Endothelial cell of umbilical vein (primary cell): ENCODE measurements at regions of chr12 and their contacts with region 1.

Region 1: DNA sequence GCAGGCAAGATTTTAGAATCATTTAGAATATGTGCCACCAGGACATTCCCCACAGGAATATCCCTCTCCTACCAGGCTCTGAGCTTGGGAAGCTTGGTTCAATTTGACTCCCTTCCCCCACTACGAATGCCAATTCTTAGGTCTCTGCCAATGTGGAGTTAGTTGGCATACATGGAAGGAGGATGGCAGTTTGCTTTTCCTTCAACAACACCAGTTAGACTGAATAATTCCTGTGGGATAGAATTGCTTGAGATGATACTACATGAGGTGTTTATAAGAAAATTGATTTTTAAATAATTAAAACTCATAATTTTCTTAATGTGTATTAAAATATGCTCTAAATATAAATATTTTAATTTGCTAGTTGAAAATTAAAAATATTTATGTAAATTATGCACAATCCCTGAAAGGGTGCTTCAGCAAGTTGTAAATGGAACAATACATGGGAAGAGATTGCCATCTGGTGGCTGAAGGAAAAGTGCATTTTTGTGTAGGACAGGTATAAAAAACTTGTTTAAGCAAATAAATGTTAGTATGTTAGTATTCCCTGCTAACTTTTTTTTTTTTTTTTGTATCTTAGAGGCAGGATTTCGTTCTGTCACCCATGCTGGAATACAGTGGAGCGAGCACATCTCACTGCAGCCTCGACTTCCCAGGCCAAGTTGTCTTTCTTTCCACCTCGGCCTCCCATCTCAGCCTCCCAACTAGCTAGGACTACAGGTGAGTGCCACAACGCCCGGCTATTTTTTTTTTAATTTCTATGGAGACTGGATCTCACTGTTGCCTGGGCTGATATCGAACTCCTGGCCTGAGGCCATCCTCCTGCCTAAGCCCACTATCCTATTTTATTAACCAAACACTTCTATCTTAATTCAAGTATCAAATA is 25.8 kb upstream of the STRAP start:
- DNase-seq: peak; percentile 82
- H3K4me3 ChIP-seq: no peak overlapping the region
- H3K27ac ChIP-seq: no peak overlapping the region
- H3K4me1 ChIP-seq: no peaks in the 10 kb centered on the region
- H3K27me3 ChIP-seq: no peaks in the 10 kb centered on the region
- CTCF ChIP-seq: peak; percentile 37 to 42
- POLR2A ChIP-seq: no peak

Region 2: GRCh38 chr12:15276088-15276698 is 580.1 kb before region 1 on chr12:
- CTCF ChIA-PET with region 1: interaction called, 5 read pairs
- POLR2A ChIA-PET with region 1: no interaction called
- dilution Hi-C with region 1: no loop called
- intact Hi-C with region 1: loop called (anchors 1 kb)
- DNase-seq: peak; percentile 52
- H3K4me3 ChIP-seq: no peak overlapping the region
- H3K27ac ChIP-seq: no peak overlapping the region
- H3K4me1 ChIP-seq: no peaks in the 10 kb centered on the region
- H3K27me3 ChIP-seq: peaks cover 0 to 1% of the 10 kb centered on the region in 2 experiments
- CTCF ChIP-seq: peak; percentile 58 to 59
- POLR2A ChIP-seq: no peak

Region 3: GRCh38 chr12:15590180-15590826 is 266.0 kb before region 1 on chr12:
- CTCF ChIA-PET with region 1: interaction called, 150 read pairs
- POLR2A ChIA-PET with region 1: no interaction called
- dilution Hi-C with region 1: no loop called
- intact Hi-C with region 1: loop called (anchors 1 kb)
- DNase-seq: peak; percentile 70
- H3K4me3 ChIP-seq: peak overlapping the region in 2 of 3 experiments; percentile 24 to 32
- H3K27ac ChIP-seq: no peak overlapping the region
- H3K4me1 ChIP-seq: peaks cover 6% of the 10 kb centered on the region
- H3K27me3 ChIP-seq: peaks cover 5 to 11% of the 10 kb centered on the region in 2 experiments
- CTCF ChIP-seq: peak; percentile 79 to 80
- POLR2A ChIP-seq: no peak

Region 4: GRCh38 chr12:15789220-15790171 is 66.8 kb before region 1 on chr12 and contains the start of gene EPS8:
- CTCF ChIA-PET with region 1: no interaction called
- POLR2A ChIA-PET with region 1: no interaction called
- dilution Hi-C with region 1: no loop called
- intact Hi-C with region 1: loop called (anchors 5 kb)
- DNase-seq: peak; percentile 94
- H3K4me3 ChIP-seq: peak within 1 kb of the TSS; percentile 49 to 83 (median 83)
- H3K27ac ChIP-seq: peak within 1 kb of the TSS; percentile 52
- H3K4me1 ChIP-seq: peaks cover 13% of the 10 kb centered on the region
- H3K27me3 ChIP-seq: no peaks in the 10 kb centered on the region
- CTCF ChIP-seq: no peak
- POLR2A ChIP-seq: peak; percentile 59
- total RNA-seq, gene EPS8: 11.9 and 12.1 TPM in 2 replicates